GM12878 (cell line): ENCODE measurements at regions of chr13 and their contacts with region 1.

Region 1: DNA sequence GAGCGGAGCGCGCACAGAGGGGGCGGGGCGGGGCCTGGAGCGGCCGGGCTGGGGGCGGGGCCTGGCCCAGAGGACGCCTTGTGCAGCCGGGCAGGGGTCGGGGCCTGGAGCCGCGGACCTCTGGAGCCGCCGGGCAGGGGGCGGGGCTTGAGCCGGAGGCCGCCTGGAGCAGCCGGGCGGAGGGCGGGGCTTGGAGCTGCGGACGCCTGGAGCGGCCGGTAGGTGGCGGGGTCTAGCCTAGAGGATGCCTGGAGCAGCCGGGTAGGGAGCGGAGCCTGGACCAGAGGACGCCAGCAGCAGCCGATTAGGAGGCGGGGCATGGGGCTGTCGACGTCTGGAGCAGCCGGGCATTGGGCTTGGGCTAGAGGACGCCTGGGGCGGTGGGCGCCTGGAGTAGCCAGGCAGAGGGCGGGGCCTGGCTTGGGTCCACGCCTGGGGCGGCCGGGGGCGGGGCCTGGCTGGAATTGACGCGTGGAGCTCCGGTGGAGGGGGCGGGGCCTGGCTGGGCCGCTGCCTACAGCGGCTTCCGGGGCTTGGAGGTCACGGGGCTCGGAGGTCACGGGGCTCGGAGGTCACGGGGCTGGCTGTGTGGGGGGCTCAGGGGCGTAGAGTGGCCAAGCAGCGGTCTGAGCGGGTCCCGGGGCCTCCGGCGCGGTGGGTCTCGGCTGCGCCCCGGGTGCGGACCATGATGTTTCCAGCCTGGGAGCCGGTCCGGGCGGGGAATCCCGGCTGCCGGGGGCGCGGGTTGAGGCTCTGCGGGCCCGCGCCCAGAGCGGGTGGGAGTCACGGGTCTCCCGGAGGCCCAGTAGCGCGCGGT is at the start of gene ANKRD10:
- DNase-seq: peak; percentile 82
- ATAC-seq: peak; percentile 84
- H3K4me3 ChIP-seq: peak within 1 kb of the TSS; percentile 93
- H3K27ac ChIP-seq: peak within 1 kb of the TSS; percentile 91
- H3K4me1 ChIP-seq: peaks cover 23% of the 10 kb centered on the region
- H3K27me3 ChIP-seq: no peaks in the 10 kb centered on the region
- CTCF ChIP-seq: peak; percentile 67 to 86 (median 84)
- EP300 ChIP-seq: no peak
- POLR2A ChIP-seq: peak; percentile 80
- RAD21 ChIP-seq: peak; percentile 65
- polyA plus RNA-seq, gene ANKRD10: 47.1 to 62.3 TPM

Region 2: GRCh38 chr13:110615322-110616102 is 299.8 kb before region 1 on chr13 and contains the start of gene NAXD:
- CTCF ChIA-PET with region 1: no interaction called
- POLR2A ChIA-PET with region 1: no interaction called
- RAD21 ChIA-PET with region 1: no interaction called
- SMC1A ChIA-PET with region 1: no interaction called
- in situ Hi-C with region 1: no loop called
- intact Hi-C with region 1: loop called (anchors 5 kb)
- DNase-seq: peak; percentile 62
- ATAC-seq: peak; percentile 87
- H3K4me3 ChIP-seq: peak within 1 kb of the TSS; percentile 63
- H3K27ac ChIP-seq: peak within 1 kb of the TSS; percentile 86
- H3K4me1 ChIP-seq: peaks cover 20% of the 10 kb centered on the region
- H3K27me3 ChIP-seq: no peaks in the 10 kb centered on the region
- CTCF ChIP-seq: no peak
- EP300 ChIP-seq: no peak
- POLR2A ChIP-seq: peak; percentile 83
- RAD21 ChIP-seq: no peak
- polyA plus RNA-seq, gene NAXD: 1.5 to 5.0 TPM

Region 3: DNA sequence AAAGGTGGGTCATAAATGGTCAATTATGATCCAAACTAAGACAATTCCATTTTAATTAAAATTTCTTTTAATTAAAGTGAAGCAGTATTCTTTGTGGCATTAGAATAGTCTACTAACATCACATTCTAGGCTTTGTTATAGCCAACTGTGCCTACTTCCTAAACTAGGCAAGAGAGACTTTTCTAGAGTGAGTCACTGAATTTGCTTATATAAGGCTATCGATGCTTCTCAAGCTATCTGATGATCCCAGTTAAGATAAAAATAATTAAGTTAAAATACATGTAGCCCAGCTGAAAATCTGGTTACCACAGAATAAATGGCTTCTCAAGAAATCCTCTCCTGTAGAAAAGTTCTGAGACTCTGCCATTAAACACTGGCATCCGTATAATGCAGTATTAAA is 12.9 kb before region 1 on chr13:
- CTCF ChIA-PET with region 1: interaction called, 5 read pairs
- POLR2A ChIA-PET with region 1: interaction called, 10 read pairs
- RAD21 ChIA-PET with region 1: interaction called, 4 read pairs
- SMC1A ChIA-PET with region 1: interaction called, 28 read pairs
- in situ Hi-C with region 1: no loop called
- intact Hi-C with region 1: no loop called
- DNase-seq: no peak
- ATAC-seq: no peak
- H3K4me3 ChIP-seq: no peak overlapping the region
- H3K27ac ChIP-seq: no peak overlapping the region
- H3K4me1 ChIP-seq: no peaks in the 10 kb centered on the region
- H3K27me3 ChIP-seq: no peaks in the 10 kb centered on the region
- CTCF ChIP-seq: no peak
- EP300 ChIP-seq: no peak
- POLR2A ChIP-seq: no peak
- RAD21 ChIP-seq: no peak

Region 4: GRCh38 chr13:110965038-110965754 is 49.9 kb after region 1 on chr13:
- CTCF ChIA-PET with region 1: interaction called, 3 read pairs
- POLR2A ChIA-PET with region 1: interaction called, 5 read pairs
- RAD21 ChIA-PET with region 1: no interaction called
- SMC1A ChIA-PET with region 1: no interaction called
- in situ Hi-C with region 1: no loop called
- intact Hi-C with region 1: loop called (anchors 1 kb)
- DNase-seq: peak; percentile 79
- ATAC-seq: peak; percentile 96
- H3K4me3 ChIP-seq: no peak overlapping the region
- H3K27ac ChIP-seq: peak overlapping the region; percentile 48; the same call in 1 of the 2 replicates
- H3K4me1 ChIP-seq: peaks cover 4% of the 10 kb centered on the region; the same call in 1 of the 2 replicates
- H3K27me3 ChIP-seq: no peaks in the 10 kb centered on the region
- CTCF ChIP-seq: no peak
- EP300 ChIP-seq: peak; percentile 50 to 69; a peak in 2 of 4 replicates
- POLR2A ChIP-seq: no peak
- RAD21 ChIP-seq: no peak

Region 5: DNA sequence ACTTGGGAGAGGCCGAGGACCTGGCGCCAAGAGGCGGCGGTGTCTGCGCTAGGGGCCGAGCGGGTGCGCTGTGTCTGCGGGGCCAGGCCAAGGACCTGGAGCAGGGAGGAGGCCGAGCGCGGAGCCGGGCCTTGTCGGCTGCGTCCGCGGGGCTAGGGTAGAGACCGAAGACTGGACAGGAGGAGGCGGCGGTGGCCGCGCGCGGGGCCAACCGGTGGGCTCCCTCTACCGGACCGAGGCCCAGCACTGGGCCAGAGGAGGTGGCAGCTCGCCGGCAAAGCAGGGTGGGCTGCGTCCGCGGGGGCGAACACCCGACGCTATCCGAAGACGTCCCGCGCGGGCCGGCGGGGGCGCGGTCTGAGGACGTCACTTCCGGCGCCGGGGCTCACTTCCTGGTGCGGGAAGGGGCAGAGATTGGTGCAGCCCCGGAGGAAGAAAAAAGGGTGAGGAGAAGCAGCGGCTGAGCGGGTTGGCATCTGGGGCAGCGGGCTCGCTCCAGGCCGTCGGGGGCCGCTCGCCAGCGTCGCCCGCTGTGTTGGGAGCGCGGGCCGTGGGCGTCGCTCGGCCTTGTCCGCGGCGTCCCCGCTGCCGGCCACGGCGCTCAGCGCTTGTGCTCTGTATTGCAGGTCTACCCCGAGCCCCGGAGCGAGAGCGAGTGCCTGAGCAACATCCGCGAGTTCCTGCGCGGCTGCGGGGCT is 238.2 kb after region 1 on chr13:
- CTCF ChIA-PET with region 1: no interaction called
- POLR2A ChIA-PET with region 1: interaction called, 5 read pairs
- RAD21 ChIA-PET with region 1: interaction called, 3 read pairs
- SMC1A ChIA-PET with region 1: interaction called, 3 read pairs
- in situ Hi-C with region 1: no loop called
- intact Hi-C with region 1: loop called (anchors 5 kb)
- DNase-seq: no peak
- ATAC-seq: peak; percentile 85
- H3K4me3 ChIP-seq: peak overlapping the region; percentile 88
- H3K27ac ChIP-seq: peak overlapping the region; percentile 81
- H3K4me1 ChIP-seq: no peaks in the 10 kb centered on the region
- H3K27me3 ChIP-seq: no peaks in the 10 kb centered on the region
- CTCF ChIP-seq: peak; percentile 7 to 20 (median 7); a peak in 2 of 6 replicates
- EP300 ChIP-seq: no peak
- POLR2A ChIP-seq: peak; percentile 93
- RAD21 ChIP-seq: peak; percentile 39; the same call in 1 of the 2 replicates